Naive thymus-derived CD4-positive, alpha-beta T cell (primary cell): ENCODE measurements at regions of chr4 and their contacts with region 1.

Region 1: GRCh38 chr4:13452927-13453579 is 31.1 kb downstream of the RAB28 start:
- DNase-seq: no peak
- ATAC-seq: no peak
- H3K4me3 ChIP-seq: no peak overlapping the region
- H3K4me3 Mint-ChIP-seq: peak overlapping the region in 7 of 10 donors; percentile 10 to 73 (median 39)
- H3K27ac ChIP-seq: no peak overlapping the region
- H3K27ac Mint-ChIP-seq: peak overlapping the region in 3 of 9 donors; percentile 12 to 89 (median 25)
- H3K4me1 ChIP-seq: no peaks in the 10 kb centered on the region
- H3K4me1 Mint-ChIP-seq: peaks cover 11 to 18% (median 16%) of the 10 kb centered on the region in 7 donors
- H3K27me3 ChIP-seq: no peaks in the 10 kb centered on the region
- H3K27me3 Mint-ChIP-seq: no peaks in the 10 kb centered on the region

Region 2: DNA sequence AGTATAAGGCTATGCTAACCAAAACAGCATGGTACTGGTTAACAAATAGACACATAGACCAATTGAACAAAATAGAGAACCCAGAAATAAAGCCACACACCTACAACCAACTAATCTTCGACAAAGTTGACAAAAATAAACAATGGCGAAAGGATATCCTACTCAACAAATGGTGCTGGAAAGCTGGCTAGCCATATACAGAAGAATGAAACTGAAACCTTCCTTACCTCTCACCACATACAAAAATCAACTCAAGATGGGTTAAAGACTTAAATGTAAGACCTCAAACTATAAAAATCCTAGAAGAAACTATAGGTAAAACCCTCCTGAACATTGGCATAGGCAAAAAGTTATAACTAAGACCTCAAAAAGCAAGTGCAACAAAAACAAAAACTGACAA is 16.1 kb before region 1 on chr4:
- CTCF ChIA-PET with region 1: no interaction called
- POLR2A ChIA-PET with region 1: no interaction called
- intact Hi-C with region 1: loop called in 1 of 2 experiments (anchors 1 kb)
- DNase-seq: no peak
- ATAC-seq: no peak
- H3K4me3 ChIP-seq: no peak overlapping the region
- H3K4me3 Mint-ChIP-seq: peak overlapping the region in 1 of 10 donors; percentile 20
- H3K27ac ChIP-seq: no peak overlapping the region
- H3K27ac Mint-ChIP-seq: no peak overlapping the region
- H3K4me1 ChIP-seq: no peaks in the 10 kb centered on the region
- H3K4me1 Mint-ChIP-seq: peaks cover 25 to 51% (median 28%) of the 10 kb centered on the region in 7 donors
- H3K27me3 ChIP-seq: no peaks in the 10 kb centered on the region
- H3K27me3 Mint-ChIP-seq: no peaks in the 10 kb centered on the region